Natural killer cell (primary cell): ENCODE measurements at regions of chr9 and their contacts with region 1.

Region 1: GRCh38 chr9:74073897-74074296 is 423.2 kb upstream of the RORB start:
- DNase-seq: no peak
- ATAC-seq: no peak
- H3K4me3 ChIP-seq: no peak overlapping the region
- H3K4me3 Mint-ChIP-seq: no peak overlapping the region
- H3K27ac ChIP-seq: no peak overlapping the region
- H3K27ac Mint-ChIP-seq: no peak overlapping the region
- H3K4me1 ChIP-seq: no peaks in the 10 kb centered on the region
- H3K4me1 Mint-ChIP-seq: no peaks in the 10 kb centered on the region
- H3K27me3 ChIP-seq: no peaks in the 10 kb centered on the region
- H3K27me3 Mint-ChIP-seq: no peaks in the 10 kb centered on the region
- CTCF ChIP-seq: no peak

Region 2: GRCh38 chr9:74025402-74025894 is 48.4 kb before region 1 on chr9:
- intact Hi-C with region 1: loop called (anchors 5 kb)
- DNase-seq: no peak
- ATAC-seq: no peak
- H3K4me3 ChIP-seq: no peak overlapping the region
- H3K4me3 Mint-ChIP-seq: no peak overlapping the region
- H3K27ac ChIP-seq: no peak overlapping the region
- H3K27ac Mint-ChIP-seq: no peak overlapping the region
- H3K4me1 ChIP-seq: peaks cover 3% of the 10 kb centered on the region
- H3K4me1 Mint-ChIP-seq: peaks cover 6 to 17% of the 10 kb centered on the region in 2 donors
- H3K27me3 ChIP-seq: no peaks in the 10 kb centered on the region
- H3K27me3 Mint-ChIP-seq: no peaks in the 10 kb centered on the region
- CTCF ChIP-seq: no peak

Region 3: GRCh38 chr9:74036549-74037231 is 37.2 kb before region 1 on chr9:
- intact Hi-C with region 1: no loop called
- DNase-seq: peak in 1 of 2 donors; percentile 10
- ATAC-seq: peak; percentile 36 to 67 (median 53)
- H3K4me3 ChIP-seq: no peak overlapping the region
- H3K4me3 Mint-ChIP-seq: peak overlapping the region; percentile 31
- H3K27ac ChIP-seq: no peak overlapping the region
- H3K27ac Mint-ChIP-seq: peak overlapping the region in 1 of 2 donors; percentile 13
- H3K4me1 ChIP-seq: no peaks in the 10 kb centered on the region
- H3K4me1 Mint-ChIP-seq: peaks cover 6% of the 10 kb centered on the region in 2 donors
- H3K27me3 ChIP-seq: no peaks in the 10 kb centered on the region
- H3K27me3 Mint-ChIP-seq: no peaks in the 10 kb centered on the region
- CTCF ChIP-seq: no peak

Region 4: GRCh38 chr9:74092491-74092834 is 18.6 kb after region 1 on chr9:
- intact Hi-C with region 1: no loop called
- DNase-seq: no peak
- ATAC-seq: no peak
- H3K4me3 ChIP-seq: no peak overlapping the region
- H3K4me3 Mint-ChIP-seq: no peak overlapping the region
- H3K27ac ChIP-seq: no peak overlapping the region
- H3K27ac Mint-ChIP-seq: no peak overlapping the region
- H3K4me1 ChIP-seq: no peaks in the 10 kb centered on the region
- H3K4me1 Mint-ChIP-seq: peaks cover 0 to 6% of the 10 kb centered on the region in 2 donors
- H3K27me3 ChIP-seq: no peaks in the 10 kb centered on the region
- H3K27me3 Mint-ChIP-seq: no peaks in the 10 kb centered on the region
- CTCF ChIP-seq: no peak